ENCODE measurements at regions of chr4 and their contacts with region 1.

Region 1: GRCh38 chr4:103046416-103047290 is 27.1 kb upstream of the SLC9B1 start:
- DNase-seq: no peak
- ATAC-seq: peak; percentile 71

Region 2: DNA sequence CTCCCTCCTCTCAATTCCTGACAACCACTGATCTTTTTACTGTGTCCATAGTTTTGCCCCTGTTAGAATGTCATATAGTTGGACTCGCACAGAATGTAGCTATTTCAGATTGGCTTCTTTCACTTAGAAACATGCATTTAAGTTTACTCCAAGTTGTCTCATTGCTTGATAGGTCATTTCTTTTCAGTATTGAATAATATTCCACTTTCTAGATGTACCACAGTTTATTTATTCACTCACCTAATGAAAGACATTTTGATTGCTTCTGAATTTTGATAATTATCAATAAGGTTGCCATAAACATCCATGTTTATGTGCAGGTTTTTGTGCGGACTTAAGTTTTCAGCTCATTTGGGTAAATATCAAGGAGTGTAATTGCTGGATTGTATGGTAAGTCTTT is 65.6 kb before region 1 on chr4:
- intact Hi-C with region 1: no loop called
- DNase-seq: no peak
- ATAC-seq: no peak

Region 3: GRCh38 chr4:103091601-103092223 is 45.1 kb after region 1 on chr4:
- intact Hi-C with region 1: loop called (anchors 5 kb)
- DNase-seq: no peak
- ATAC-seq: no peak

Region 4: DNA sequence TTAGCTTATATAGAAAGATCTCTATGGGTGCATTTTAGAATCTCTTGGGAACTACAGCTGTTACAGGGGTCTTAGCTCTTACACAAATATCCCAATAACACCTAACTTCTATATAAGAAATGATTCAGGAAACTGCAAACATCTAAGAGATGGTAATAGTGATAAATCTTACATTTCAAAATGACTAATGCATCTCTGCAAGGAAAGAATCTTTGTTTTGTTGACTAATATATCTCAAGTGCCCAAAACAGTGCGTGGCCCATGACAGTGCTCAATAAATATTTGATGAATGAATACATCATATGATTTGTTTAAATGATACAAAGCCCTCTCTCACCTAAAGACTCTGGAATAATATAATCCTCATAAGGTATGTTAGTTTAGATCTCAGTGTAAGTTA is 104.0 kb after region 1 on chr4:
- intact Hi-C with region 1: no loop called
- DNase-seq: no peak
- ATAC-seq: no peak

Measured in Right ventricle myocardium inferior (tissue), 1 donor.